Calu3 (cell line): ENCODE measurements at regions of chr2 and their contacts with region 1.

Region 1: DNA sequence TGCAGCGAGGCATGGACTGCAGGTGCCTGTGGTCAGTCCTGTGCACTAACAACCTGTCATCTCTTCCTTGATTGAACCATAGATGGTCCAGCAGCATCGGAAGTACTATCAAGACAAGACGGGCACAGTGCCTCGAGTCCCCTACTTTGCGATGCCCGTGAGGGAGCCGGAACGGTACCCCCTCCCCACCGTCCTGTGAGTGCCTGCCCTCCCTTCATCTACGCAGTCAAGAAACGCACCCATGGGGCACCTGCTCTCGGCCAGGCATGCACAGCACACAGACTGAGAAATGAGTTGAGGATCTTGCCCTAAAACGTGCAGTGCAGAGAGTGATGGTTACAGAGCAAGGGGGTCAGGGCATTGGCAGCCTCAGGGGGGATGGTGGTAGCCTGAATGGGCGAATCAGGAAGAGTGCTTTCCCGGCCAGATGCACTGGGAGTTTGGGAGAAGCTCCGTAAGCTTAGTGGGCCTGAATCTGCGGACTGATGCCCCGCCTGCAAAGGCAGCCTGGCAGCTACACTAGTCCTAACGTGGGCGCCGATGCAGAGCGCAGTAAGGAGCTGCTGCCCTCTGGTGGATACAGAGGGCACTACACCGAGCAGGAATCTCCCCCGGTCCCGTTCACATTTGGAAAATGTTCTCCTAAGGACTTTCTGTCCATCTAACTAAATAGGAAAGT is 63.6 kb downstream of the CIB4 start:
- DNase-seq: peak; percentile 74
- H3K4me3 Mint-ChIP-seq: no peak overlapping the region
- H3K27ac Mint-ChIP-seq: no peak overlapping the region
- H3K4me1 Mint-ChIP-seq: no peaks in the 10 kb centered on the region
- H3K27me3 Mint-ChIP-seq: peaks cover 15% of the 10 kb centered on the region
- CTCF ChIP-seq: peak; percentile 94

Region 2: GRCh38 chr2:26503231-26503880 is 74.2 kb before region 1 on chr2:
- CTCF ChIA-PET with region 1: interaction called, 5 read pairs
- intact Hi-C with region 1: loop called (anchors 1 kb)
- DNase-seq: peak; percentile 90
- H3K4me3 Mint-ChIP-seq: peak overlapping the region; percentile 62
- H3K27ac Mint-ChIP-seq: peak overlapping the region; percentile 3
- H3K4me1 Mint-ChIP-seq: no peaks in the 10 kb centered on the region
- H3K27me3 Mint-ChIP-seq: peaks cover 63% of the 10 kb centered on the region
- CTCF ChIP-seq: peak; percentile 91

Region 3: DNA sequence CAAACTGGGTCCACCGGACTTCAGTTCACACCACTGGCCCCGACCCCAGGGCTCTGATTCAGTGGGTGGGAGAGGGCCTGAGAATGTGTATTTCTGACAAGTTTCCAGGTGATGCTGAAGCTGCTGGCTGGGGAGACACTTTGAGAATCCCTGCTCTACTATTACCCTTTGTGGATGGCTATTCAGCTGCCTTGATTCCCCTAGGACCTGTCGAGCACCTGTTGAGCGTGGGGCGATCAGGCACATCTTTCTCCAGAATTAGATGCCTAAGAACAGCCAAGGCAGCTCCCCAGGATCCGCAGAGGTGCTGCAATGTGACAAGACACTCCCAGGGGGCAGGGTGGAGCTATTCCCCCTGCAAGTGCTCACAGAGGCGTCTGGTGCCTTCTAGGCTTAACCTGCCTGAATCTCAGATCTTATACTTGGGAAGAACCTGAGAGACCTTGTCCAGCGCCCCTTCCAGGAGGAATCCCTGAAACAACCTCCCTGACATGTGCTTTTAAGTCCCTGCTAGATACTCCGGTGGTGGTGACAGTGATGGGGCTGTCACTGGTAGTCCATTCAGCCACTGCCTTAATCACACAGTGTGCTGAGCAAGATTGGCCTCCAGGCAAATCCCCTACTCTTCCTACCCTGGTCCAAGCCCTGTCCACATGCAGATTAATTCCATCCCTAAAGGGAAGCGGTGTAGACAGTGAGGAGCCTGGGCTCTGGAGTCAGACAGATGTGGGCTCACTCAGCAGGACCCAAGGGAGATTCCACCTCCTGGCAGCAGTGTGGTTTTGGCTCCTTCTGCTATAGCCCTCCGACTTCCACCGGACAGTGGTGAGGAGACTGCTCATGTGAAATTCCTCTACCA is 56.3 kb before region 1 on chr2:
- CTCF ChIA-PET with region 1: interaction called, 33 read pairs
- intact Hi-C with region 1: loop called (anchors 1 kb)
- DNase-seq: peak; percentile 67
- H3K4me3 Mint-ChIP-seq: no peak overlapping the region
- H3K27ac Mint-ChIP-seq: no peak overlapping the region
- H3K4me1 Mint-ChIP-seq: no peaks in the 10 kb centered on the region
- H3K27me3 Mint-ChIP-seq: peaks cover 46% of the 10 kb centered on the region
- CTCF ChIP-seq: peak; percentile 72

Region 4: GRCh38 chr2:26561918-26562810 is 15.4 kb before region 1 on chr2:
- CTCF ChIA-PET with region 1: interaction called, 13 read pairs
- intact Hi-C with region 1: no loop called
- DNase-seq: peak; percentile 94
- H3K4me3 Mint-ChIP-seq: peak overlapping the region; percentile 83
- H3K27ac Mint-ChIP-seq: peak overlapping the region; percentile 86
- H3K4me1 Mint-ChIP-seq: peaks cover 17% of the 10 kb centered on the region
- H3K27me3 Mint-ChIP-seq: peaks cover 34% of the 10 kb centered on the region
- CTCF ChIP-seq: peak; percentile 65

Region 5: DNA sequence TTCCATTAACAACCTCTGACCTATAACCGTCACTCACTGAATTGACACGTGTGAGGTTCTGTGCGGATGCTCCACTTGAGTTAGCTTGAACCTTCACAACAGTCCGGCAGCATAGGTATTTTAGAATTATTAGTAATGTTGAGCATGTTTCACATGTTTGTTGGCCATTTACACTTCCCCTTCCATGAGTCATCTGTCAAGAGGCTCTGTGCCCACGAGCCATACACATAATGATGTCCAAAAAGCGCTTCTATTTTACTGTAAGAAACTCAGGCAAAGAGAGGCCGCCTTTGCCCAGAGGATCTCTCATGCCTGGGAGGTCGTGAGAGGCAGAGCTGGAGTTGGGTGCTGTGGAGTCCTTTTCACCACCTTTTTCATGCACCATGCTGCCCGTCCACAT is 426.3 kb after region 1 on chr2:
- CTCF ChIA-PET with region 1: no interaction called
- intact Hi-C with region 1: no loop called
- DNase-seq: no peak
- H3K4me3 Mint-ChIP-seq: no peak overlapping the region
- H3K27ac Mint-ChIP-seq: no peak overlapping the region
- H3K4me1 Mint-ChIP-seq: peaks cover 13% of the 10 kb centered on the region
- H3K27me3 Mint-ChIP-seq: no peaks in the 10 kb centered on the region
- CTCF ChIP-seq: no peak